PC-3 (cell line): ENCODE measurements at regions of chrX and their contacts with region 1.

Region 1: DNA sequence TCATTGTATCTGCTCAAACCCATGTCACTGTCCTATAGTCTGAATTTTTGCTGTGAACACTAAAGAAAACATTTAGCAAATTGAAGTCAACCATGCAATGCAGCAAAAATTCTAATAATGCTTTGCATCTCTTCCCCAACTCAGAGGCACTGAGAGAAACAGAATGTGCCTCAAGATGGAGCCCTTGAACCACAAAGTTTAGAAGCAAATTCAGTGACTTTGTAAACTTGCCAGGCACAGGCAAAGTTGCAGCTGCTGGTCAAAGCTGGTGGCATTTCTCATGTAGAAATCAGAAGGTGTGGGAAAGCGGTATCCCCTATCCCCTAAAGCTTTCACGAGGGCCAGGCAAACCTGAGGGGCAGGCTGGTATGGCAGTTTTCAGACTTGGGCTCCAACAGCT is 121.7 kb upstream of the DIPK2B start:
- DNase-seq: peak; percentile 92
- ATAC-seq: peak; percentile 78
- H3K4me3 ChIP-seq: no peak overlapping the region
- H3K27ac ChIP-seq: peak overlapping the region; percentile 99
- H3K4me1 ChIP-seq: peaks cover 28% of the 10 kb centered on the region
- H3K27me3 ChIP-seq: no peaks in the 10 kb centered on the region
- CTCF ChIP-seq: peak; percentile 77

Region 2: DNA sequence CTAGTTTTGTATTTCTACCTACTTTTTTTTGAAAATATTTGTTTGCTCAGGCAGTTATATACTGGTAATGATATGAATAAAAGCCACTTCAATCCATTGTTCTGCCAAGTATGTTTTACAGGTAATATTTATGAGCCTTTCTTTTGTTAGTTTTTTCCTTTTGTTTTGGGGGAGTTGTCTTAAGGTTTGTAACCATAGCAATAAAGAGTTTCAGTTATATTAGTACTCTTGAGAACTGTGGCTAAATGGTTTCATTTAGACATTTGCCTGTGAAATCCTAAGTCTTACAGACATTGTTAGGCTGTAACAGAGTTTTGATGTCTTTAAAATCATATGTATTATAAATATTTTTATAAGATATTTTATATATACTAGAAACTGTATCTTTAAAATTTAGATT is 271.8 kb before region 1 on chrX:
- CTCF ChIA-PET with region 1: no interaction called
- POLR2A ChIA-PET with region 1: no interaction called
- intact Hi-C with region 1: no loop called
- DNase-seq: peak; percentile 8
- ATAC-seq: peak; percentile 38
- H3K4me3 ChIP-seq: no peak overlapping the region
- H3K27ac ChIP-seq: no peak overlapping the region
- H3K4me1 ChIP-seq: no peaks in the 10 kb centered on the region
- H3K27me3 ChIP-seq: no peaks in the 10 kb centered on the region
- CTCF ChIP-seq: no peak

Region 3: GRCh38 chrX:45381366-45381765 is 59.0 kb after region 1 on chrX:
- CTCF ChIA-PET with region 1: interaction called, 20 read pairs
- POLR2A ChIA-PET with region 1: no interaction called
- intact Hi-C with region 1: no loop called
- DNase-seq: no peak
- ATAC-seq: no peak
- H3K4me3 ChIP-seq: no peak overlapping the region
- H3K27ac ChIP-seq: no peak overlapping the region
- H3K4me1 ChIP-seq: no peaks in the 10 kb centered on the region
- H3K27me3 ChIP-seq: no peaks in the 10 kb centered on the region
- CTCF ChIP-seq: no peak

Region 4: DNA sequence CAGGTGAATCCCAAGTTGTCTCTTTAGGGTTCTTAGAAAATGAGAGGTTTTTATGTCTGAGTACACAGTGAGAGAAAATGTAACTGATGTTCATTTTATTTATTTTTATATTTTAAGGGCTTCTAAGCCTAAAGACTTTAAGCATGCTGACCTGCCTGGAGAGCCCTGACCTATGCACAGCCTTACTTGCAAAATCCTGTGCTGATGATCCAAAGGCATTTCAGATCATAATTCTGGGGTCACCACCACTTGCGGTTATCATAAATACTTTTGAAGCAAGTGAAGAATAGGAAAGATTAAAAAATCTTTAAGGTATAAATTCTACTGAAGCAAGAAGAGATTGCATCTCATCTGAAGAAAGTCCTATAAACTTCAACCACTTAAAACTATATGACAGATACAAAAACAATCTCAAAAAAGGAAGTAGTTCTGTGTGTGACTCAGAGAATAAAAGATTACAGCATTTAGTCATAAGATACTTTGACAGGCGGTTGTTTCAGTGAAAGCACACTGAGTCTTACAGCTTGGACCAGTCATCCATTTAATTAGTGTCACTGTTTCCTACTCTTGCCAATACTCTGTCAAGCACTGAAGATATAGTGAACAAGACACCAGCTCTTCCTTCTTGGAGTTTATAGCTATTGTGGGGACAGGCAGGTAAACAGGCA is 123.5 kb after region 1 on chrX:
- CTCF ChIA-PET with region 1: no interaction called
- POLR2A ChIA-PET with region 1: no interaction called
- intact Hi-C with region 1: loop called (anchors 1 kb)
- DNase-seq: peak; percentile 92
- ATAC-seq: peak; percentile 87
- H3K4me3 ChIP-seq: no peak overlapping the region
- H3K27ac ChIP-seq: peak overlapping the region; percentile 98
- H3K4me1 ChIP-seq: peaks cover 59% of the 10 kb centered on the region
- H3K27me3 ChIP-seq: no peaks in the 10 kb centered on the region
- CTCF ChIP-seq: no peak

Region 5: DNA sequence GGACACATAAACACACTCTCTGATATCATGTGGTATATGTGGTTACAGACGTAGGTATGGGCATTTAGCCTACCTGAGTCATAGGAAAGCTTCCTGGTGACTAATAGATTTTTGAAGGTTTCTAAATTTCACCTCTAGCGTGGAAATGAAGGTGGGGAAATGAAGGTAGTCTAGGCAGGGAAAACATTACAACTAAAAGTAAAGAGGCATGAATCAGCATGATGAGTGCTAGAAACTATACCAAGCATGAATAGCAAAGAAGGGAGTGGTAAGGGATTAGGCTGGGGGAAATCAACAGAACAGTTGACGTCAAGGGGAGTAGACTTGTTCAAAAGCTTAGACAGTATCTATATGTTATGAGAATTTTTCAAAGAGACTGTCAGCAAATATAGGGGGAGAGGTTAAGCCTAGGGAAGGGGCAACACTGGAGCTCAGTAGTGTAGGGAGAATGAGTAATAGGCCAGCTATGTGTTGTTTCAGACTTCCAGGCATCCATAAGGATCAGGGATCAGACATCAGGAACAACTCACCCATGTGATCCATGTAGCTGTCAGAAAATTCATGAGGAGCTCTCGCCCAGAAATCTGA is 157.5 kb after region 1 on chrX:
- CTCF ChIA-PET with region 1: no interaction called
- POLR2A ChIA-PET with region 1: interaction called, 6 read pairs
- intact Hi-C with region 1: loop called (anchors 1 kb)
- DNase-seq: peak; percentile 96
- ATAC-seq: peak; percentile 83
- H3K4me3 ChIP-seq: no peak overlapping the region
- H3K27ac ChIP-seq: peak overlapping the region; percentile 100
- H3K4me1 ChIP-seq: peaks cover 48% of the 10 kb centered on the region
- H3K27me3 ChIP-seq: no peaks in the 10 kb centered on the region
- CTCF ChIP-seq: no peak

Region 6: GRCh38 chrX:45505214-45505613 is 182.8 kb after region 1 on chrX:
- CTCF ChIA-PET with region 1: no interaction called
- POLR2A ChIA-PET with region 1: no interaction called
- intact Hi-C with region 1: loop called (anchors 1 kb)
- DNase-seq: peak; percentile 32
- ATAC-seq: no peak
- H3K4me3 ChIP-seq: no peak overlapping the region
- H3K27ac ChIP-seq: peak overlapping the region; percentile 100
- H3K4me1 ChIP-seq: peaks cover 43% of the 10 kb centered on the region
- H3K27me3 ChIP-seq: no peaks in the 10 kb centered on the region
- CTCF ChIP-seq: no peak

Region 7: GRCh38 chrX:45557390-45557789 is 235.0 kb after region 1 on chrX:
- CTCF ChIA-PET with region 1: no interaction called
- POLR2A ChIA-PET with region 1: no interaction called
- intact Hi-C with region 1: loop called (anchors 2 kb)
- DNase-seq: peak; percentile 43
- ATAC-seq: no peak; the same call in 1 of the 2 replicates
- H3K4me3 ChIP-seq: no peak overlapping the region
- H3K27ac ChIP-seq: no peak overlapping the region
- H3K4me1 ChIP-seq: no peaks in the 10 kb centered on the region
- H3K27me3 ChIP-seq: no peaks in the 10 kb centered on the region
- CTCF ChIP-seq: peak; percentile 50

Region 8: GRCh38 chrX:45660477-45660876 is 338.1 kb after region 1 on chrX:
- CTCF ChIA-PET with region 1: no interaction called
- POLR2A ChIA-PET with region 1: no interaction called
- intact Hi-C with region 1: no loop called
- DNase-seq: no peak
- ATAC-seq: no peak
- H3K4me3 ChIP-seq: no peak overlapping the region
- H3K27ac ChIP-seq: no peak overlapping the region
- H3K4me1 ChIP-seq: no peaks in the 10 kb centered on the region
- H3K27me3 ChIP-seq: no peaks in the 10 kb centered on the region
- CTCF ChIP-seq: no peak

Region 9: GRCh38 chrX:45689971-45690370 is 367.6 kb after region 1 on chrX:
- CTCF ChIA-PET with region 1: no interaction called
- POLR2A ChIA-PET with region 1: no interaction called
- intact Hi-C with region 1: no loop called
- DNase-seq: no peak
- ATAC-seq: no peak
- H3K4me3 ChIP-seq: no peak overlapping the region
- H3K27ac ChIP-seq: no peak overlapping the region
- H3K4me1 ChIP-seq: no peaks in the 10 kb centered on the region
- H3K27me3 ChIP-seq: no peaks in the 10 kb centered on the region
- CTCF ChIP-seq: no peak

Region 10: DNA sequence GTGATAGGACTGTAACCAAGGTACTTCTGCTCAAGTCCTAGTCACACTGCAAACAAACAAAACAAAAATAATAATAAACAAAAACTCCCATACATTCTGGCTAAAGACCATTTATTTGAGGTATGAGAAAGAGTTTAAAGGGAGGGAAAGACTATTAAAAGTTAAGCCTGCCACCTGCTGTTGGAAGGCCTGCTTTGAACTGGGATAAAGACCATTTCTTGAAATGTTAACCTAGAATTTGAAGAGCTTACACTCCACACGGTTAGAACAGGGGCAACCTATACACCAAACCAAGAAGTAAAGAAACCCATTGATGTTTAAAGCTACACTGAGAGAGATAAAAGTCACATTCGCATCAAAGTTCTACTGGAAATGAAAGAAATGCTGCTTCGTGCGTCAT is 427.0 kb after region 1 on chrX:
- CTCF ChIA-PET with region 1: interaction called, 5 read pairs
- POLR2A ChIA-PET with region 1: no interaction called
- intact Hi-C with region 1: loop called (anchors 2 kb)
- DNase-seq: peak; percentile 60
- ATAC-seq: peak; percentile 14
- H3K4me3 ChIP-seq: no peak overlapping the region
- H3K27ac ChIP-seq: peak overlapping the region; percentile 77
- H3K4me1 ChIP-seq: peaks cover 95% of the 10 kb centered on the region
- H3K27me3 ChIP-seq: no peaks in the 10 kb centered on the region
- CTCF ChIP-seq: peak; percentile 64; the same call in 1 of the 2 replicates